GM12878 (cell line): ENCODE measurements at regions of chr3 and their contacts with region 1.

Region 1: GRCh38 chr3:106183762-106184391 is 315.1 kb upstream of the CBLB start:
- DNase-seq: peak; percentile 81
- ATAC-seq: peak; percentile 70
- H3K4me3 ChIP-seq: no peak overlapping the region
- H3K27ac ChIP-seq: peak overlapping the region; percentile 100
- H3K4me1 ChIP-seq: peaks cover 24% of the 10 kb centered on the region
- H3K27me3 ChIP-seq: no peaks in the 10 kb centered on the region
- CTCF ChIP-seq: no peak
- EP300 ChIP-seq: no peak
- POLR2A ChIP-seq: no peak
- RAD21 ChIP-seq: no peak

Region 2: GRCh38 chr3:105798381-105798934 is 385.4 kb before region 1 on chr3:
- CTCF ChIA-PET with region 1: no interaction called
- POLR2A ChIA-PET with region 1: interaction called, 4 read pairs
- RAD21 ChIA-PET with region 1: interaction called, 13 read pairs
- SMC1A ChIA-PET with region 1: interaction called, 16 read pairs
- in situ Hi-C with region 1: no loop called
- intact Hi-C with region 1: no loop called
- DNase-seq: peak; percentile 51
- ATAC-seq: peak; percentile 73
- H3K4me3 ChIP-seq: no peak overlapping the region
- H3K27ac ChIP-seq: peak overlapping the region; percentile 61
- H3K4me1 ChIP-seq: peaks cover 37% of the 10 kb centered on the region
- H3K27me3 ChIP-seq: no peaks in the 10 kb centered on the region
- CTCF ChIP-seq: no peak
- EP300 ChIP-seq: peak; percentile 64 to 73; a peak in 3 of 4 replicates
- POLR2A ChIP-seq: no peak
- RAD21 ChIP-seq: peak; percentile 16; the same call in 1 of the 2 replicates

Region 3: GRCh38 chr3:105862217-105862616 is 321.7 kb before region 1 on chr3:
- CTCF ChIA-PET with region 1: no interaction called
- POLR2A ChIA-PET with region 1: interaction called, 3 read pairs
- RAD21 ChIA-PET with region 1: interaction called, 39 read pairs
- SMC1A ChIA-PET with region 1: interaction called, 45 read pairs
- in situ Hi-C with region 1: no loop called
- intact Hi-C with region 1: loop called (anchors 1 kb)
- DNase-seq: peak; percentile 69
- ATAC-seq: peak; percentile 80
- H3K4me3 ChIP-seq: peak overlapping the region; percentile 39
- H3K27ac ChIP-seq: peak overlapping the region; percentile 55
- H3K4me1 ChIP-seq: peaks cover 17% of the 10 kb centered on the region
- H3K27me3 ChIP-seq: no peaks in the 10 kb centered on the region
- CTCF ChIP-seq: no peak
- EP300 ChIP-seq: peak; percentile 79 to 90
- POLR2A ChIP-seq: no peak
- RAD21 ChIP-seq: peak; percentile 32; the same call in 1 of the 2 replicates

Region 4: GRCh38 chr3:105988540-105989212 is 195.2 kb before region 1 on chr3:
- CTCF ChIA-PET with region 1: no interaction called
- POLR2A ChIA-PET with region 1: no interaction called
- RAD21 ChIA-PET with region 1: no interaction called
- SMC1A ChIA-PET with region 1: no interaction called
- in situ Hi-C with region 1: no loop called
- intact Hi-C with region 1: no loop called
- DNase-seq: no peak
- ATAC-seq: no peak
- H3K4me3 ChIP-seq: no peak overlapping the region
- H3K27ac ChIP-seq: no peak overlapping the region
- H3K4me1 ChIP-seq: no peaks in the 10 kb centered on the region
- H3K27me3 ChIP-seq: no peaks in the 10 kb centered on the region
- CTCF ChIP-seq: no peak
- EP300 ChIP-seq: no peak
- POLR2A ChIP-seq: no peak
- RAD21 ChIP-seq: no peak

Region 5: GRCh38 chr3:106170636-106171035 is 13.2 kb before region 1 on chr3:
- CTCF ChIA-PET with region 1: interaction called, 10 read pairs
- POLR2A ChIA-PET with region 1: interaction called, 11 read pairs
- RAD21 ChIA-PET with region 1: interaction called, 99 read pairs
- SMC1A ChIA-PET with region 1: interaction called, 89 read pairs
- in situ Hi-C with region 1: no loop called
- intact Hi-C with region 1: no loop called
- DNase-seq: no peak
- ATAC-seq: no peak
- H3K4me3 ChIP-seq: no peak overlapping the region
- H3K27ac ChIP-seq: no peak overlapping the region
- H3K4me1 ChIP-seq: peaks cover 24% of the 10 kb centered on the region
- H3K27me3 ChIP-seq: no peaks in the 10 kb centered on the region
- CTCF ChIP-seq: no peak
- EP300 ChIP-seq: no peak
- POLR2A ChIP-seq: no peak
- RAD21 ChIP-seq: no peak

Region 6: DNA sequence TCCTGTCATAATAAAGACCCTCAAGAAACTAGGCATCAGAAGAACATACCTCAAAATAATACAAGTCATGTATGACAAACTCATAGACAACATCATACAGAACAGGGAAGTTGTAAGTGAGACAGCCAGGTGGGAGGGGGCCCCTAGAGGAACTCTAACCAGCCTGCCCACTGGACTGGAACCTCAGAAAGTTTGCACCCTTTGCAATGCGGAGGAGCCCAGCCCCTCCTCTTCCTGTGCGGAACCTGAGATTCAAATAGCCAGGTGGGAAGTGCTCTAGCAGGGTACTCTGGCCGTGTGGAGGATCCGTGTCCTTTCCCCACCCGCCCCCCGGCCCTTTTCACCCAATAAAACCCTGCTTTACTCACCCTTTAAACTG is 72.0 kb after region 1 on chr3:
- CTCF ChIA-PET with region 1: interaction called, 8 read pairs
- POLR2A ChIA-PET with region 1: interaction called, 22 read pairs
- RAD21 ChIA-PET with region 1: interaction called, 96 read pairs
- SMC1A ChIA-PET with region 1: interaction called, 51 read pairs
- in situ Hi-C with region 1: no loop called
- intact Hi-C with region 1: loop called (anchors 1 kb)
- DNase-seq: peak; percentile 93
- ATAC-seq: peak; percentile 88
- H3K4me3 ChIP-seq: peak overlapping the region; percentile 83
- H3K27ac ChIP-seq: peak overlapping the region; percentile 99
- H3K4me1 ChIP-seq: no peaks in the 10 kb centered on the region
- H3K27me3 ChIP-seq: no peaks in the 10 kb centered on the region
- CTCF ChIP-seq: no peak
- EP300 ChIP-seq: peak in 1 of 2 experiments; percentile 82; a peak in 2 of 4 replicates
- POLR2A ChIP-seq: peak; percentile 71
- RAD21 ChIP-seq: peak; percentile 7; the same call in 1 of the 2 replicates

Region 7: GRCh38 chr3:106333911-106334618 is 150.2 kb after region 1 on chr3:
- CTCF ChIA-PET with region 1: interaction called, 3 read pairs
- POLR2A ChIA-PET with region 1: no interaction called
- RAD21 ChIA-PET with region 1: interaction called, 4 read pairs
- SMC1A ChIA-PET with region 1: interaction called, 5 read pairs
- in situ Hi-C with region 1: no loop called
- intact Hi-C with region 1: loop called (anchors 10 kb)
- DNase-seq: no peak
- ATAC-seq: peak; percentile 78
- H3K4me3 ChIP-seq: no peak overlapping the region
- H3K27ac ChIP-seq: peak overlapping the region; percentile 13; the same call in 1 of the 2 replicates
- H3K4me1 ChIP-seq: peaks cover 20% of the 10 kb centered on the region
- H3K27me3 ChIP-seq: no peaks in the 10 kb centered on the region
- CTCF ChIP-seq: no peak
- EP300 ChIP-seq: peak in 1 of 2 experiments; percentile 59; a peak in 1 of 4 replicates
- POLR2A ChIP-seq: no peak
- RAD21 ChIP-seq: 0 out of 2 replicates have a peak, but pooled peaks have one; percentile 7